B cell (primary cell): ENCODE measurements at regions of chr6 and their contacts with region 1.

Region 1: GRCh38 chr6:3162565-3163247 is 5.4 kb upstream of the TUBB2A start:
- DNase-seq: peak; percentile 81
- ATAC-seq: peak; percentile 79
- H3K4me3 ChIP-seq: peak overlapping the region in 4 of 5 experiments; percentile 71 to 81 (median 78)
- H3K4me3 Mint-ChIP-seq: peak overlapping the region; percentile 83
- H3K27ac ChIP-seq: peak overlapping the region in 1 of 2 donors; percentile 51
- H3K27ac Mint-ChIP-seq: peak overlapping the region; percentile 71
- H3K4me1 ChIP-seq: peaks cover 10 to 18% of the 10 kb centered on the region in 2 donors
- H3K4me1 Mint-ChIP-seq: peaks cover 23% of the 10 kb centered on the region
- H3K27me3 ChIP-seq: peaks cover 0 to 10% (median 0%) of the 10 kb centered on the region in 4 experiments
- H3K27me3 Mint-ChIP-seq: peaks cover 4% of the 10 kb centered on the region
- CTCF ChIP-seq: no peak

Region 2: DNA sequence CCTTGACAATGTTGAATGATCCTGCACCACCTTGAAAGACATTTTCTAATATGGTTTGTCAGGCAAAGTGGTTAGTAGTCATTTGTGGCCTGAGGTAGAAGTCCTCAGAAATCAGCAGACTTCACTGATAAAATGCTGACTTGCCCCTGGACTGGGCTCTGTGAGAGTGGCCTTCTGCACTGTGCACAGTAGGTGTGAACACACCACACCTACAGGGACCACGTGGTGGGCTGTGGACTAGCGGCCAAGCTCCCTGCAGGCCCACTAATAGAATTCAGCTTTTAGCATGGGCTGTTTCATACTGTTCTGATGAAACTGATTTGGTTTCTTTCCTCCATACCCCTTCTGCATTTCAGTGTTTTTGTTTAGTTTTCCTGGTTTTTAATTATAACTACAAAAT is 36.9 kb before region 1 on chr6:
- CTCF ChIA-PET with region 1: interaction called, 5 read pairs
- POLR2A ChIA-PET with region 1: no interaction called
- intact Hi-C with region 1: loop called (anchors 1 kb)
- DNase-seq: no peak
- ATAC-seq: no peak
- H3K4me3 ChIP-seq: no peak overlapping the region
- H3K4me3 Mint-ChIP-seq: no peak overlapping the region
- H3K27ac ChIP-seq: no peak overlapping the region
- H3K27ac Mint-ChIP-seq: no peak overlapping the region
- H3K4me1 ChIP-seq: peaks cover 0 to 12% of the 10 kb centered on the region in 2 donors
- H3K4me1 Mint-ChIP-seq: peaks cover 10% of the 10 kb centered on the region
- H3K27me3 ChIP-seq: no peaks in the 10 kb centered on the region
- H3K27me3 Mint-ChIP-seq: no peaks in the 10 kb centered on the region
- CTCF ChIP-seq: no peak